PC-3 (cell line): ENCODE measurements at regions of chr7 and their contacts with region 1.

Region 1: DNA sequence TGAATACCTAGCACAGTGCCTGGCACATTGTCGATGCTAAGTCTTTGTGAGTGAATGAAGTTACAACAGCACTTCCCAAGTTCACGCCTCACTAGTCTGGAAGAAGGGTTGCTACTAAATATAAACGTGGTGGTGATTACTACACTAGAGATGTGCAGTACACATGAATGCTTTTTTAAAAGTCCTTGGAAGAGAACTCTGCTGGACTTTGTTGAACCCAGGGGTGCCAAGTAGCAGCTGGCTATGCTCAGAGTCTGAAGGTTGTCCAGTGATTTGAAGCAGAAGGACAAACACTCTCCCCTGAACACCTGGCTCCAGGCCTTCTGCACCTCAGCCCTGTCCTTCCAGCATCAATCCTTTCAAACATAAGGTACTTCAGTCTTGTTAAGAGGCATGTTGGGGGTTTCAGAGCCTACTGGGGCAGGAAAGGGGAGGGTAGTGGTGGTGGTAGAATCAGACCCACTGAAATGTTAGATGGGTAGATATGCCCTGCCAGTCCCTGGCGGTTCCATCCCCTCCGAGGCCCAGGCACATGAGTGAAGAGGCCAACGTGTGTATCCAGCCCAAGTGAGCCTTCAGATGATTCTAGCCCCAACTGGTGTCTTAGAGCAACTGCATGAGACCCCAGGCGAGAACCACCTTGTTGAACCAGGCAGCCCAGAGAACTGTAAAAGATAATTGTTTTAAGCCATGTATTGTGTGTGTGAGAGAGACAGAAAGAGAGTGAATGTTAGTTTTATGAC is 94.4 kb downstream of the TAX1BP1 start:
- DNase-seq: no peak
- ATAC-seq: no peak
- H3K4me3 ChIP-seq: no peak overlapping the region
- H3K27ac ChIP-seq: no peak overlapping the region
- H3K4me1 ChIP-seq: no peaks in the 10 kb centered on the region
- H3K27me3 ChIP-seq: no peaks in the 10 kb centered on the region
- CTCF ChIP-seq: no peak

Region 2: GRCh38 chr7:27677912-27678612 is 156.3 kb before region 1 on chr7:
- CTCF ChIA-PET with region 1: no interaction called
- POLR2A ChIA-PET with region 1: no interaction called
- intact Hi-C with region 1: no loop called
- DNase-seq: peak; percentile 95
- ATAC-seq: peak; percentile 96
- H3K4me3 ChIP-seq: peak overlapping the region; percentile 34; the same call in 1 of the 2 replicates
- H3K27ac ChIP-seq: peak overlapping the region; percentile 100
- H3K4me1 ChIP-seq: peaks cover 31% of the 10 kb centered on the region
- H3K27me3 ChIP-seq: no peaks in the 10 kb centered on the region
- CTCF ChIP-seq: no peak

Region 3: GRCh38 chr7:27689591-27690164 is 144.7 kb before region 1 on chr7:
- CTCF ChIA-PET with region 1: no interaction called
- POLR2A ChIA-PET with region 1: no interaction called
- intact Hi-C with region 1: loop called (anchors 5 kb)
- DNase-seq: peak; percentile 67
- ATAC-seq: peak; percentile 93
- H3K4me3 ChIP-seq: no peak overlapping the region
- H3K27ac ChIP-seq: no peak overlapping the region
- H3K4me1 ChIP-seq: peaks cover 18% of the 10 kb centered on the region
- H3K27me3 ChIP-seq: no peaks in the 10 kb centered on the region
- CTCF ChIP-seq: peak; percentile 89

Region 4: DNA sequence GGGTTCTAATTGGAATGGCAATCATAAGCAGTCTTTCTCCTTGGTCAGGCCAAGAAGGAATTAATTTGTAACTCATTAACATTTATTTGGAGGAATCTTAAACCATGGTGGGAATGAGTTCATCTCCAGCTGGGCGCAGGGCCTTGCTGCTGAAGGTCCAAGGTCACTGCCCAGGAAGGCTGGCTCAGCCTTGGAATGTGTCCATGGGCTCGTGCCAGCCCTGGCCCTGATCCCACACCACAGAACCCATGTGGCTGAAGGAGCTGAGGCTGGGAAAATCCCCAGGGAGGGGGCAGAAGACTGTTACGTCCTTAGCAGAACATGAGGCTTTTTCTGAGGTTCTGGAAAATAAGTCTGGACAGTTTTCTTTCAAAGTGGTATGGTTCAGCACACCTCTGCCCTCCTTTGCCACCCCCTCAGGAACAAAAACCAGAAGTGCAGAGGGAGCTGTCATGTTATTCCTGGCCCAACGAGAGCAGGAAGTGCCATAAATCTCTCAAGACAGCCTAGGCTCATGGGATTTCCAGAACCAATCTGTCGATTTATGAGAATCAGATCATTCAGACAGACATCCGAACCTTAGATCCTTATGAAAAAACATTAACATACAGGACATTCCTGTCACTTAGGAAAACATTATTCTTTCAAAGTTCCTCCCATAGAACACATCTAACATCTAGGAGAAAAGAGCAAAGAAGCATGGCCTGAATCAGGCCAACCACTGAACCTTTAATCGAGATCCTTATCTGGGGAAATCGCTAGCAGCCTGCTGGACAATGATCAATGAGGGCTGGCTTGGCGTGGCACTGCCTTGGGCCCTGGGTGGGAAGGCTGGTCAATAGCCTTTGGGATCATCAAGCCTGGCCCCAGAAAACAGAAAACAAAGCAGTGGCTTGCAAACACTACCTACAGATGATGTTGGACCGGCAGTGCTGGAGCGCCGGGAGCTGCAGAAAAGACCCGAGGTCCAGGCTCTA is 39.9 kb after region 1 on chr7:
- CTCF ChIA-PET with region 1: no interaction called
- POLR2A ChIA-PET with region 1: no interaction called
- intact Hi-C with region 1: no loop called
- DNase-seq: peak; percentile 21
- ATAC-seq: no peak
- H3K4me3 ChIP-seq: no peak overlapping the region
- H3K27ac ChIP-seq: no peak overlapping the region
- H3K4me1 ChIP-seq: peaks cover 4% of the 10 kb centered on the region; the same call in 1 of the 2 replicates
- H3K27me3 ChIP-seq: no peaks in the 10 kb centered on the region
- CTCF ChIP-seq: no peak

Region 5: DNA sequence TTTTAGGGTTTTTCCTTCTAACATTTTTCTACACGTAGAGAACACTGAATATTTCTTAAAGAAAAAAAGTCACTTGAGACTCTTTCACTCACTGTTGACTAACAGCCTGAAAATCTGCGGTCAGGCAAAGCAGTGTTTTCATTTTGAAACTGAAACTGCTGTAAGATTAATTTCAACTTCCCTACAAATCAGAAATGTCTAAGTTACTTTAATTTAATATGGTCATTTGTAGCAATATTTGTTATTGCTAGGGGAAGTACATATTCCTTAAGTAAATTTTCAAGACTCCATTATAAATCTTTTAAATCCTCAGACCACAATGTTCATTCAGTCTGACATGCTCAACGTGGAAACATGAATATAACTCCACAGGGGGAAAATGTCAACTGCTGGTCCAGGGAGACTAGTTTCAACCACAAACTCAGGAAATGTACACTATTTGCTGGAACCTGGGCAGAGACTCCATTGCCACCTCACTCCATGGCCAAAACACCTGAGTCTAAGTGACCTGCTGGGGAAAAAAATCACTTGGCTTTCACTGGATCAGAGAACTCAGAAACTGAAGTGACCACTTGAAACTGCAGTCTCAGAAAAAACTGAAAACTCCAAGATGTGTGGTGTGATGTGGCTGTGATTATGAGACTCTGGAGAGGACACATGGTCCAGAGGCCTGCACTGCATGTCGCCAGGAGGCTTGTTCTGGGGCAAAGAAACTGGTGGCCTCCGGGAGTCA is 66.8 kb after region 1 on chr7:
- CTCF ChIA-PET with region 1: no interaction called
- POLR2A ChIA-PET with region 1: no interaction called
- intact Hi-C with region 1: loop called (anchors 10 kb)
- DNase-seq: peak; percentile 28
- ATAC-seq: peak; percentile 51
- H3K4me3 ChIP-seq: peak overlapping the region; percentile 52
- H3K27ac ChIP-seq: peak overlapping the region; percentile 37
- H3K4me1 ChIP-seq: peaks cover 4% of the 10 kb centered on the region
- H3K27me3 ChIP-seq: no peaks in the 10 kb centered on the region
- CTCF ChIP-seq: no peak